ENCODE measurements at regions of chr2 and their contacts with region 1.

Region 1: DNA sequence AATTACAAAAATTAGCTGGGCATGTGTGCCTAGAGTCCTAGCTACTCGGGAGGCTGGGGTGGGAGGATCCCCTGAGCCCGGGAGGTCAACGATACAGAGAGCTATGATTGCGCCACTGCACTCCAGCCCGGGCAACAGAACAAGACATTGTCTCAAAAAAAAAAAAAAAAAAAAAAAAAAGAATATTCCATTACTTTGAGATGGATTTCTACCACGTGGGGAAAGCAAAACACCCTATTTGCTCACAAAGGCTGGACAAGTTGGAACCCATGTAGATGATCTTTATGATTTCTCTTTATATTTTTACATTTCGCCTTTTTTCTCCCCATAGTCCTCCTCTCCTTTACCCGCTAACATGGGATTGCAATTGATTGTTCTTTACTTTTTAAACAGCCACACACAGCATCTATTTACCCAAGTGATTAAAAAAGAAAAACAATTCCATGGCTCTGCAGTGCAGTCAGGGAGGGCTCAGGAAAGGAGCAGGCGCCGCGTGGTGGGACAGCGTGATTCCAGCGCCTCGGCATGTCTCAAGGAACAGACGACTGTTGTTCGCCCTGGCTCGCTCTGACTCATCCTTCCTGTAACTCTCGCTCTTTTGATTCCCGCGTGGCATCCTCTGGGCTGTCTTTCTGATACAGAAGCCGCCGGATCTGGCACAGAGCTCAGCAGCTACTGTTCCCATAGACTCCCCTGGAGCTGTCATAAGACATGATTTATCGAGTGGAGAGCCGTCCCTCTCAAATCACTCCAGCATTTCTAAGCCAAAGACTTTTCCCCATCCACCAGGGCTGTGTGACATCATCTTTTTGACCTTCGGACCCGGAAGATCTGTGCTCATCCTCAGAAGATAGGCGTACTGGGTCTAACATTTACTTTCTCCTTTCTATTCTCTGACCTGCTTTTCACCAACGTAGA is 230.4 kb upstream of the AGAP1 start:
- DNase-seq: peak; percentile 53 to 94 (median 84)
- H3K4me3 ChIP-seq: peak overlapping the region in 56 of 59 donors; percentile 2 to 62 (median 40)
- H3K27ac ChIP-seq: peak overlapping the region in 56 of 59 donors; percentile 3 to 92 (median 76)
- H3K27me3 ChIP-seq: no peaks in the 10 kb centered on the region
- CTCF ChIP-seq: peak in 15 of 56 donors; percentile 4 to 34 (median 14)

Region 2: GRCh38 chr2:235135990-235136561 is 127.4 kb before region 1 on chr2:
- intact Hi-C with region 1: loop called in 1 of 2 experiments (anchors 10 kb)
- DNase-seq: peak; percentile 56 to 88 (median 78)
- H3K4me3 ChIP-seq: peak overlapping the region in 1 of 59 donors; percentile 28
- H3K27ac ChIP-seq: no peak overlapping the region
- H3K27me3 ChIP-seq: peaks cover 0 to 3% (median 0%) of the 10 kb centered on the region in 45 donors
- CTCF ChIP-seq: peak; percentile 51 to 88 (median 75)

Region 3: GRCh38 chr2:235588750-235589149 is 325.3 kb after region 1 on chr2:
- intact Hi-C with region 1: loop called in 1 of 2 experiments (anchors 10 kb)
- DNase-seq: no peak
- H3K4me3 ChIP-seq: peak overlapping the region in 4 of 59 donors; percentile 1 to 29 (median 9)
- H3K27ac ChIP-seq: peak overlapping the region in 24 of 59 donors; percentile 5 to 80 (median 45)
- H3K27me3 ChIP-seq: no peaks in the 10 kb centered on the region
- CTCF ChIP-seq: no peak